Activated CD4-positive, alpha-beta T cell treated with anti-CD3 and anti-CD28 coated beads for 36 hours (primary cell): ENCODE measurements at regions of chr19 and their contacts with region 1.

Region 1: GRCh38 chr19:4791170-4792018 is at the start of gene FEM1A:
- DNase-seq: peak; percentile 99
- ATAC-seq: peak; percentile 97
- H3K4me3 Mint-ChIP-seq: peak within 1 kb of the TSS; percentile 84
- H3K27ac Mint-ChIP-seq: peak within 1 kb of the TSS; percentile 85
- H3K4me1 Mint-ChIP-seq: peaks cover 40% of the 10 kb centered on the region
- H3K27me3 Mint-ChIP-seq: no peaks in the 10 kb centered on the region
- total RNA-seq, gene FEM1A: 9.2 to 10.6 TPM

Region 2: DNA sequence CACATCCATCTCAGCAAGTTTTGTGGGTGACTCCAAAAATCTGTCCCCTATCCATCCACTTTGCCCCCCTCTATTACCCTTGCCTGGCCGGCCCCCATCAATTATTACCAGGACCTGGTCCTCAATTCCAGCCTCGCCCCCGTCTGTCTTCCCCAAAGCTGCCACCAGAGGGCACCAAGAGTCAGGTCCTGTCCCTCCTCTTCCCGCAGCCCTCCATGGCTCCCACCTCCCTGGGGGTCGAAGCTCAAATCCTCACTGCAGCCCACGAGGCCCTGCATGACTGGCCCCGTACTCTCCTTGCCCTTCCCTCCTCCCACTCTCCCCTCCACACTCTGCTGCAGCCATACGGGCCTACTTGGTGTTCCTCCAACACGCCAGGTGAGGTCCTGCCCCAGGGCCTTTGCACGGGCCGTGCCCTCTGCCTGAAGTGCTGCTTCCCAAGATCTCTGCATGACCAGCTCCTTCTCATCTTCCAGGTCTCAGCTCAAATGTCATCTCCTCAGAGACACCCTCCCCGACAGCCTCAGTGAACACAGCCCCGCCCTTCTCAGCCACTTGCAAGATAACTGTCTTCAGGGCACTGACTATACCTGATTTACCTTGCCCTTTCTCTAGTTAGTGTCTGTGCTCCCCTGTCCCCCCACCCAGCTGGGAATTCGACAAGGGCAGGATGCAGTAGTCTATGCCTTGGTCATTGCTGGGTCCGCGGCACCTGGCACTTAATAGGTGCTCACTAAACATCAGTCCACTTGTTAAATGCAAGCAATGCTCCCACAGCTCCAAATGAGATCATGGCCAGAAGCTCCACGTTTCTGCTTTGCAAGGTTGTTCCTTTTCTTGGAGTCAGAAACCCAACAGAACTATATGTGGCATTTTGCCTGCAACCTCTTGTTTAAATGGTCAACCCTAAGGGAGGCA is 215.1 kb before region 1 on chr19:
- CTCF ChIA-PET with region 1: interaction called, 3 read pairs
- POLR2A ChIA-PET with region 1: no interaction called
- intact Hi-C with region 1: loop called in 1 of 2 experiments (anchors 5 kb)
- DNase-seq: peak; percentile 85
- ATAC-seq: peak; percentile 61
- H3K4me3 Mint-ChIP-seq: peak overlapping the region; percentile 4
- H3K27ac Mint-ChIP-seq: no peak overlapping the region
- H3K4me1 Mint-ChIP-seq: peaks cover 8% of the 10 kb centered on the region
- H3K27me3 Mint-ChIP-seq: peaks cover 32% of the 10 kb centered on the region

Region 3: DNA sequence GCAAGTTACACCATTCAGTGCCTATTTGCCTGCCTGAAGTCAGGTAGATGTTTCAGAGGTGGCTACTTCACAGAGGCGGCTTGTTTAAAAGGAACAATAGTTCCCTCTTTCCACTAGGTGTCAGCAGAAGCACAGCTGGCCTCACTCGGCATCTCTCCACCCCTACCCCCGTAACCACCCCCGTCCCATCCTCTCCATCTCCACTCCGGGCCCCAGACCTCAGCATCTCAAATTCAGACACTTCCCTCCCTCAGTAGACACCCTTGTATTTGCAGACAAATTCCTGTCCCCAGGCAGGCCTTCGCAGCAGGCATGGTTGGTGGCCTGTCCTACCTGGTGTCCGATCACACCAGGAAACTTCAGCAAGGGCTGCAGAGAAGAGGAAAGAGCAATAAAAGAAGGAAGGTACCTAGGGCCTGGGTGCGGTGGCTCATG is 58.7 kb before region 1 on chr19:
- CTCF ChIA-PET with region 1: interaction called, 77 read pairs
- POLR2A ChIA-PET with region 1: interaction called, 6 read pairs
- intact Hi-C with region 1: loop called (anchors 1 kb)
- DNase-seq: peak; percentile 76
- ATAC-seq: peak; percentile 90
- H3K4me3 Mint-ChIP-seq: no peak overlapping the region
- H3K27ac Mint-ChIP-seq: no peak overlapping the region
- H3K4me1 Mint-ChIP-seq: peaks cover 4% of the 10 kb centered on the region
- H3K27me3 Mint-ChIP-seq: peaks cover 4% of the 10 kb centered on the region

Region 4: GRCh38 chr19:4815426-4816201 is 24.2 kb after region 1 on chr19:
- CTCF ChIA-PET with region 1: interaction called, 18 read pairs
- POLR2A ChIA-PET with region 1: no interaction called
- intact Hi-C with region 1: loop called in 1 of 2 experiments (anchors 1 kb)
- DNase-seq: peak; percentile 84
- ATAC-seq: peak; percentile 87
- H3K4me3 Mint-ChIP-seq: peak overlapping the region; percentile 55
- H3K27ac Mint-ChIP-seq: peak overlapping the region; percentile 77
- H3K4me1 Mint-ChIP-seq: peaks cover 26% of the 10 kb centered on the region
- H3K27me3 Mint-ChIP-seq: no peaks in the 10 kb centered on the region

Region 5: DNA sequence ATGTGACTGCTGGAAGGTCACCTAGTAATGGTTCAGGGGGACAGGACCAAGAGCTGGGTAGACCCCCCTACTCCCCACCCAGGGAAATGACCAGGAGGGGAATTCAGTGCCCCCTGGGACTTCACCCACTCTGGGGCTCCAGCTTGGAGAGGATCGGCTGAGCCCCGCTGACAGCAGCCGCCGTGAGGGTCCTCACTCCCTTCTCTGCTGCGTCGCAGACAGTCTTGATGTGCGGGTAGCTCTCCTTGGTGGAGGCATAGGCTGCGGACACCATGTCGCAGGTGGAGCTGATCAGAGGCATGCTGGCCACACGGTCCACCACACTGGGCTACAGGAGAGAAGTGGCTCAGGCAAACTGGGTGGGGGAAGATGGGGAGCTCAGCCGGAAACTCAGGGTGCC is 68.3 kb after region 1 on chr19:
- CTCF ChIA-PET with region 1: no interaction called
- POLR2A ChIA-PET with region 1: no interaction called
- intact Hi-C with region 1: no loop called
- DNase-seq: no peak
- ATAC-seq: no peak
- H3K4me3 Mint-ChIP-seq: no peak overlapping the region
- H3K27ac Mint-ChIP-seq: no peak overlapping the region
- H3K4me1 Mint-ChIP-seq: peaks cover 3% of the 10 kb centered on the region
- H3K27me3 Mint-ChIP-seq: no peaks in the 10 kb centered on the region

Region 6: DNA sequence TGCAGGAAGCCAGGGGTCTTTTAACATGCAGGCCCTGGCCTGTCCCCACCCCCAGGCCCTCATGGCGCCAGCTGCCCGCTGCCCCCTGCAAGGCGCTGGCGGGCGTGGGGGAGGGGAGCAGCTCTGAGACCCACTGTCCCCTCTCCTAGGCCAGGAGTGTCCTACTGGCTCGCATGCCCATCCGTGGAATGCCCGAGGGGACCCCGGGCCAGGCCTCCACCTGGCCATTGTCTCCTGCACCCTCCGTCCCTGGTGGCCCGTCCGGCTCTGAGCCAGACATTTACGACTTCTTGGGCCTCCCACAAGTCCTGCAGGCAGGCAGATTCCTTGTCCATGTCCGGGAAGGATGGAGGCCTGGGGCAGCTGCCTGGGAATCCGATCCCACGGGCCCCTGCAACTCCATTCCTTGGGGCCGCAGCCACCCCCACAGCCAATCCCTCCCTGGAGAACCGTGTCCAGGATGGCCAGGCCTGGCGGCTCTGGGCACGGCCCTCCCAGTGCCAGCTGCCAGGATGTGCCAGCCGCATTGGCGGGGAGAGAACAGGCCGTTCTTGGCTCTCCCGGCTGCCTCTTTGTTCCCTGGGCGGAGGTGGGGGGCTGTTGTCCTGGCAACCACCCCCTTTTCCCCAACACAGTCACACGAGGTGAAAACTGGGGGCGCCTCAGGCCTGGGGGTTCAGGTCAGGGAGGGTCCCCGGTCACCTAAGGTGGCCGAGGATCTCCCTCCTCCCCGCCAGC is 86.5 kb after region 1 on chr19:
- CTCF ChIA-PET with region 1: no interaction called
- POLR2A ChIA-PET with region 1: no interaction called
- intact Hi-C with region 1: no loop called
- DNase-seq: no peak
- ATAC-seq: no peak
- H3K4me3 Mint-ChIP-seq: no peak overlapping the region
- H3K27ac Mint-ChIP-seq: no peak overlapping the region
- H3K4me1 Mint-ChIP-seq: peaks cover 6% of the 10 kb centered on the region
- H3K27me3 Mint-ChIP-seq: no peaks in the 10 kb centered on the region

Region 7: DNA sequence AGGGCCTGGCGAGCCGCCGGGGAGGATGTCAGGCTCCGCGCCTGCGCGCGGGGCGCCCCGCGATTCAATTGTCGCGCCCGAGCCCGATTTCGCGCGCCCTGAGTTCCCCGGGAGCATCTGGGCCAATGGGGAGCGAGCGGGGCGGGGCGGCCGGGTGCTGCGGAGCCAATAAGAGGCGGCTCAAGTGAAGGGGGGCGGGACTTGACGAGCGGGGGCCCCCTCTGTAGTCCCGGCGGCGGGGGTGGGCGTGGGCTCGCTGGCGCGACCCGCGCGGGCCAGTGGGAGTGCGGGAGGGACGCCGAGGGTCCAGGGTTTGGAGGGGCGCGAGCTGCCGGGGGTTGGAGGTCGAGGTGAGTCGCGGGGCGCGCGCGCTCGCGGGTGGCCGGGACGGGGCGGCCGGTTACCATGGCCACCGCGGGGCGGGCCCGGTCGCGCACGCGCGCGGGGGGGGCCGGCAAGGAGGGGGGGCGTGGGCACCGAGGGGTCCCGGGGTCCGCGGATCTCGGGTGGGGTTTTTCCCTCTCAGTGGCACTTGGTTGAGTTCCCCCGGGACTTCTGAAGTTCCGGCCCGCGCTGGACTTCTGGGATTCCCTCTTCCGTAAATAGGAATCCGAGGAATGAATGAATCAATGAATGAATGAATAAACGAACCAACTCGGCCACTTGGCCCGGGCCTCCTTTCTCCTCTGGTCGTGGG is 118.7 kb after region 1 on chr19:
- CTCF ChIA-PET with region 1: interaction called, 7 read pairs
- POLR2A ChIA-PET with region 1: no interaction called
- intact Hi-C with region 1: loop called in 1 of 2 experiments (anchors 1 kb)
- DNase-seq: peak; percentile 98
- ATAC-seq: peak; percentile 78
- H3K4me3 Mint-ChIP-seq: peak overlapping the region; percentile 83
- H3K27ac Mint-ChIP-seq: peak overlapping the region; percentile 90
- H3K4me1 Mint-ChIP-seq: peaks cover 42% of the 10 kb centered on the region
- H3K27me3 Mint-ChIP-seq: no peaks in the 10 kb centered on the region